ENCODE measurements at regions of chr9 and their contacts with region 1.

Region 1: GRCh38 chr9:81521892-81522291 is 167.5 kb downstream of the TLE1 start:
- DNase-seq: no peak
- H3K4me3 ChIP-seq: no peak overlapping the region
- H3K27ac ChIP-seq: no peak overlapping the region
- H3K4me1 ChIP-seq: no peaks in the 10 kb centered on the region
- H3K27me3 ChIP-seq: no peaks in the 10 kb centered on the region
- CTCF ChIP-seq: no peak
- POLR2A ChIP-seq: no peak

Region 2: GRCh38 chr9:82961504-82962125 is 1439.7 kb after region 1 on chr9:
- intact Hi-C with region 1: loop called (anchors 10 kb)
- DNase-seq: peak; percentile 87 to 91
- H3K4me3 ChIP-seq: no peak overlapping the region
- H3K27ac ChIP-seq: no peak overlapping the region
- H3K4me1 ChIP-seq: peaks cover 0 to 11% of the 10 kb centered on the region in 2 donors
- H3K27me3 ChIP-seq: no peaks in the 10 kb centered on the region
- CTCF ChIP-seq: peak; percentile 27 to 95 (median 87)
- POLR2A ChIP-seq: no peak

Measured in thyroid gland (tissue), 4 donors.